ENCODE measurements at regions of chr15 and their contacts with region 1.

Region 1: GRCh38 chr15:74307827-74308644 is 59.4 kb downstream of the CYP11A1 start:
- DNase-seq: peak; percentile 82
- CTCF ChIP-seq: peak; percentile 66

Region 2: DNA sequence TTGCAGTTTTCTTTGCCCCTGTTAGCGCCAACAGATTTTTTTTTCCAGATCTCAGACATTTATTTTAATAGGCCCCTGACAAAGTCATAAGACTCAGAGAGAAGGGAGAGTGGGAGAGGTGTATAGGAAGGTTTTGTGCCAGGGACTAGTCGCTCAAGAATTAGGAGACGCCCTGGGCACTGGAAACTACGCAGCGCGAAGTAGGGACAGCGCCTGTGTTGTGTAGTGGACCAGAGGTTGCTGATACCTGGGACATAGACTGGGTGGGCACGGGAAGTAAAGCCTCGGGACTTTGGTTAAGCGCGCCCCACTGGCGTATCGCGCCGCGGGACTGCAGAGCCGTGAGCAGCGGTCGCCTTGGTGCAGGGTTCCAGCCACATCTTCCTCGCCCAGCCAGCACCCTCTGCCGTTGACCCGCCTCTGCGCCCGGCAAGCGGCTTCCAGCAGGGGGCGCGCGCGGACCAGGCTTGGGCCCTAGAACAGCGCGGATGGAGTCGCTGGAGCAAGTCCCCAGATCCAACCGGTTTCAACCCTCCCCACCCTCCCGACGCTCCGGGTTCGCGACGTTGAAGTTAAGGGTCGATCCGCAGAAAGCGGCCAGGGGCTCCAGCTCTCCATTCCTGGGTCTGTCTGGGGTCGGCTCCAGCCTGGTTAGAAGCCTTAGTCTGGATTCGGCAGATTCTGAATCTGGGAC is 180.6 kb before region 1 on chr15:
- in situ Hi-C with region 1: loop called (anchors 5 kb)
- DNase-seq: peak; percentile 90
- CTCF ChIP-seq: peak; percentile 100

Measured in GM13976 (cell line).